Activated CD8-positive, alpha-beta T cell treated with anti-CD3 and anti-CD28 coated beads, Interleukin-2, amount 10 ng/mL, durations not matched to agents 7 days and 5 days (primary cell): ENCODE measurements at regions of chr15 and their contacts with region 1.

Region 1: DNA sequence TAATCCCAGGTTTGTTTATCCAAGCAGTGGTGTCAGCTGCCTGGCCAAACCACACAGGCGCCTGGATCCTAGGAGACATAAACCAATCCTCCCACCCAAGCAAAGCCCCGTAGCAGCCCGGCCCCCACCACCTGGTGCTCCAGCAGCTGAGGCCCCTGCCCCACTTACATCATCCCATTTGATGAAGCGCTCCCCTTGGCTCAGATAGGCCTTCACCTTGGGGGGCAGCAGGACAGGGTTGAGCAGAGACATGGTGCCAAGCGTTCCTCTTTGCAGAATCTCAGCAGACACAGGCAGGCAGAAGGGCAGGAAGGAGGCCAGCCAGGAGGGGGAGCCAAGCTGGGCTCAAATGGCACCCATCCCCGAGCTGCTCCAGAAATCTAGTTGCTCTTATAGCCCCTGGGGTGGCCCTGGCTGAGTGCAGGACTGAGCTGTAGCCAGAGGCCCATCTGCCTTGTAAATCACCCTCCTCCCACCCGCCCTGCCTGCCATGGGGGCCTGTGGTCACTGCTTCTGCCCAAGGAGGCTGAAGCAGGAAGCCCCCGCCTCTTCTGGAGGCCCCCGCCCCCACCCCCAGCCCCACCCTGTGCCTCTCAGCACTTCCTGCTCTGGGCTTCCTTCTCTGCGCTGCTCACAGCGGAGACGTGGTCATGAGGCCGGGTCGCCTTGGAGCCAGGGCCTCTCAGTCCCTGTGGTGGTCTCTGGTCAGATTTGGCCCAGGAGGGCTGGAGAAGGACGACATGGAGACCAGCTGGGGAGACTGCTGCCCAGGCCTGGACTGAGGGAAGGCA is at the start of gene PLCB2:
- DNase-seq: peak; percentile 82
- ATAC-seq: peak; percentile 81
- H3K4me3 Mint-ChIP-seq: peak within 1 kb of the TSS; percentile 99
- H3K27ac Mint-ChIP-seq: peak within 1 kb of the TSS; percentile 98
- H3K4me1 Mint-ChIP-seq: peaks cover 38% of the 10 kb centered on the region
- H3K27me3 Mint-ChIP-seq: peaks cover 13% of the 10 kb centered on the region
- total RNA-seq, gene PLCB2: 133 to 160 TPM

Region 2: GRCh38 chr15:39908186-39908585 is 399.4 kb before region 1 on chr15:
- CTCF ChIA-PET with region 1: no interaction called
- POLR2A ChIA-PET with region 1: no interaction called
- DNase-seq: no peak
- ATAC-seq: no peak
- H3K4me3 Mint-ChIP-seq: no peak overlapping the region
- H3K27ac Mint-ChIP-seq: no peak overlapping the region
- H3K4me1 Mint-ChIP-seq: no peaks in the 10 kb centered on the region
- H3K27me3 Mint-ChIP-seq: peaks cover 25% of the 10 kb centered on the region

Region 3: GRCh38 chr15:40282144-40282868 is 25.3 kb before region 1 on chr15:
- CTCF ChIA-PET with region 1: interaction called, 559 read pairs
- POLR2A ChIA-PET with region 1: interaction called, 21 read pairs
- DNase-seq: peak; percentile 62
- ATAC-seq: peak; percentile 73
- H3K4me3 Mint-ChIP-seq: peak overlapping the region; percentile 61
- H3K27ac Mint-ChIP-seq: no peak overlapping the region
- H3K4me1 Mint-ChIP-seq: peaks cover 9% of the 10 kb centered on the region
- H3K27me3 Mint-ChIP-seq: peaks cover 46% of the 10 kb centered on the region

Region 4: DNA sequence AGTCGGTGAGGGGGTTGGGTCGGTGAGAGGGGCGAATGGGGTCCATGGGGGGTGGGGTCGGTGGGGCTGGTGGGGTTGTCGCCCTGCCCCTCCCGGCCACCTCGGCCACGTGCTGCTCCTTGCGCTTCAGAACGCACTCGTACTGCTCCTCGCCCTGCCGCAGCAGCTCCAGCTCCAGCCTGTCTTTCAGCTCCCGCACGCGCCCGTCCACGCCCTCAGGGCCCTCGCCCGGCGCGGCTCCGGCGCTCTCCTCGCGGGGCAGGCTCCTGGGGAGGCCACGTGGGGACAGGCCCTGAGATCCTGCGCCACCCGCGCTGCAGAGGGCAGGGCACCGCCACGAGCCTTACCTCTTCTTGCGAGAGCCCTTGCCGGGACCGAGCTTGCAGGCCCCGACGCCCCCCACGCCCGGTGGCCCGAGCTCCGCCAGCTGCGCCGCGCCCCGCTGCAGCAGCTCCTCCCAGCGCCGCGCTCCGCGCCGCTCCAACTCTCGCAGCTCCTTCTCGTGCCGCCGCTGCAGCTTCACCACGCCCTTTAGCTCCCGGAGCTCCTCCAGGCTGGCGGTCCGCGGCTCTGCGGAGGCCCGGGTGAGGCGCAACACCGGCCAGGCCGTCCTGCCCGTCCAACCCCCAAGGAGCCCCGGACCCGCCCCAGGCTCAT is 16.6 kb before region 1 on chr15:
- CTCF ChIA-PET with region 1: interaction called, 34 read pairs
- POLR2A ChIA-PET with region 1: interaction called, 10 read pairs
- DNase-seq: no peak
- ATAC-seq: no peak
- H3K4me3 Mint-ChIP-seq: no peak overlapping the region
- H3K27ac Mint-ChIP-seq: no peak overlapping the region
- H3K4me1 Mint-ChIP-seq: no peaks in the 10 kb centered on the region
- H3K27me3 Mint-ChIP-seq: no peaks in the 10 kb centered on the region

Region 5: GRCh38 chr15:40323239-40323952 is 15.8 kb after region 1 on chr15 and contains the start of gene INAFM2:
- CTCF ChIA-PET with region 1: interaction called, 158 read pairs
- POLR2A ChIA-PET with region 1: interaction called, 17 read pairs
- DNase-seq: peak; percentile 95
- ATAC-seq: peak; percentile 91
- H3K4me3 Mint-ChIP-seq: peak within 1 kb of the TSS; percentile 73
- H3K27ac Mint-ChIP-seq: no peak within 1 kb of the TSS
- H3K4me1 Mint-ChIP-seq: peaks cover 31% of the 10 kb centered on the region
- H3K27me3 Mint-ChIP-seq: peaks cover 8% of the 10 kb centered on the region
- total RNA-seq, gene INAFM2: 8.7 to 9.4 TPM

Region 6: DNA sequence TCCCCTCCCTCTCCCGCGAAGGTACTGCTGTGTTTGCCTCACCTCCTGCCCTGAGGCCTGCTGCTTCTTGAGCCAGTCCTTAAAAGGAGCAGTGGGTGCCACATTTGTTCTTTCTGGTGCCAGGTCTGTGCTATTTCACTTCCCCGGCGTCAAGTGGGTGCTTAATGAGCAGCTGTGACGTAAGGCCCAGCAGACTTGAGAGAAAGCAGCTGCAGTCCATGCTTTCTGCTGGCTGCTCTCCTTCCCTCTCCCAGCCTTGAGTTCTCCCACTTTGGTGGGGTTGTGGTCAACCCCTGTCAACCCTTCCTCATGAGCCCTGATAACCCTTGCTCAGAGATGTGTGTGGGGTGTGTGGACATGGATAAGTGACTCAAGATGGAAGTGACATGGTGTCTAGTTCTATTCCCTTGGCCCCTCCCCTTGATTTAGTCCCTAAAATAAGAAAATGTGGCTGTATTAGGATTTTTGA is 22.8 kb after region 1 on chr15:
- CTCF ChIA-PET with region 1: interaction called, 326 read pairs
- POLR2A ChIA-PET with region 1: interaction called, 13 read pairs
- DNase-seq: no peak
- ATAC-seq: no peak
- H3K4me3 Mint-ChIP-seq: no peak overlapping the region
- H3K27ac Mint-ChIP-seq: no peak overlapping the region
- H3K4me1 Mint-ChIP-seq: peaks cover 33% of the 10 kb centered on the region
- H3K27me3 Mint-ChIP-seq: no peaks in the 10 kb centered on the region